Activated naive CD4-positive, alpha-beta T cell treated with anti-CD3 and anti-CD28 coated beads for 36 hours (primary cell): ENCODE measurements at regions of chr13 and their contacts with region 1.

Region 1: GRCh38 chr13:76473552-76474134 is 412.6 kb downstream of the KCTD12 start:
- DNase-seq: peak; percentile 85
- H3K4me3 Mint-ChIP-seq: no peak overlapping the region
- H3K27ac Mint-ChIP-seq: no peak overlapping the region
- H3K4me1 Mint-ChIP-seq: no peaks in the 10 kb centered on the region
- H3K27me3 Mint-ChIP-seq: peaks cover 5% of the 10 kb centered on the region

Region 2: GRCh38 chr13:75372517-75372916 is 1101.1 kb before region 1 on chr13:
- CTCF ChIA-PET with region 1: no interaction called
- intact Hi-C with region 1: loop called (anchors 5 kb)
- DNase-seq: no peak
- H3K4me3 Mint-ChIP-seq: no peak overlapping the region
- H3K27ac Mint-ChIP-seq: no peak overlapping the region
- H3K4me1 Mint-ChIP-seq: peaks cover 5% of the 10 kb centered on the region
- H3K27me3 Mint-ChIP-seq: no peaks in the 10 kb centered on the region

Region 3: GRCh38 chr13:75675421-75675820 is 798.2 kb before region 1 on chr13:
- CTCF ChIA-PET with region 1: interaction called, 7 read pairs
- intact Hi-C with region 1: loop called (anchors 1 kb)
- DNase-seq: no peak
- H3K4me3 Mint-ChIP-seq: no peak overlapping the region
- H3K27ac Mint-ChIP-seq: no peak overlapping the region
- H3K4me1 Mint-ChIP-seq: no peaks in the 10 kb centered on the region
- H3K27me3 Mint-ChIP-seq: no peaks in the 10 kb centered on the region

Region 4: GRCh38 chr13:75870397-75870903 is 603.2 kb before region 1 on chr13:
- CTCF ChIA-PET with region 1: interaction called, 50 read pairs
- intact Hi-C with region 1: no loop called
- DNase-seq: peak; percentile 15
- H3K4me3 Mint-ChIP-seq: peak overlapping the region; percentile 40
- H3K27ac Mint-ChIP-seq: no peak overlapping the region
- H3K4me1 Mint-ChIP-seq: peaks cover 16% of the 10 kb centered on the region
- H3K27me3 Mint-ChIP-seq: peaks cover 5% of the 10 kb centered on the region

Region 5: GRCh38 chr13:76903544-76904162 is 430.0 kb after region 1 on chr13:
- CTCF ChIA-PET with region 1: no interaction called
- intact Hi-C with region 1: loop called (anchors 1 kb)
- DNase-seq: peak; percentile 81
- H3K4me3 Mint-ChIP-seq: no peak overlapping the region
- H3K27ac Mint-ChIP-seq: no peak overlapping the region
- H3K4me1 Mint-ChIP-seq: no peaks in the 10 kb centered on the region
- H3K27me3 Mint-ChIP-seq: peaks cover 10% of the 10 kb centered on the region